ENCODE measurements at regions of chr16 and their contacts with region 1.

Region 1: GRCh38 chr16:50665128-50665878 is 15.8 kb downstream of the SNX20 start:
- DNase-seq: peak; percentile 69 to 80 (median 77)
- ATAC-seq: peak; percentile 94
- H3K4me3 ChIP-seq: no peak overlapping the region; the same call in 1 of the 2 replicates
- H3K27ac ChIP-seq: no peak overlapping the region
- H3K4me1 ChIP-seq: peaks cover 0 to 5% of the 10 kb centered on the region in 2 experiments; a peak in 2 of 5 replicates
- H3K27me3 ChIP-seq: peaks cover 4 to 14% of the 10 kb centered on the region in 2 experiments; a peak in 3 of 5 replicates
- CTCF ChIP-seq: peak; percentile 84 to 93 (median 92)
- EP300 ChIP-seq: no peak
- POLR2A ChIP-seq: no peak
- RAD21 ChIP-seq: peak; percentile 87 to 89

Region 2: GRCh38 chr16:50224286-50224685 is 441.0 kb before region 1 on chr16:
- CTCF ChIA-PET with region 1: no interaction called
- POLR2A ChIA-PET with region 1: no interaction called
- in situ Hi-C with region 1: no loop called
- intact Hi-C with region 1: no loop called
- DNase-seq: no peak
- ATAC-seq: no peak
- H3K4me3 ChIP-seq: no peak overlapping the region
- H3K27ac ChIP-seq: no peak overlapping the region
- H3K4me1 ChIP-seq: peaks cover 8 to 13% of the 10 kb centered on the region in 2 experiments; a peak in 4 of 5 replicates
- H3K27me3 ChIP-seq: no peaks in the 10 kb centered on the region
- CTCF ChIP-seq: no peak
- EP300 ChIP-seq: no peak
- POLR2A ChIP-seq: no peak
- RAD21 ChIP-seq: no peak

Region 3: DNA sequence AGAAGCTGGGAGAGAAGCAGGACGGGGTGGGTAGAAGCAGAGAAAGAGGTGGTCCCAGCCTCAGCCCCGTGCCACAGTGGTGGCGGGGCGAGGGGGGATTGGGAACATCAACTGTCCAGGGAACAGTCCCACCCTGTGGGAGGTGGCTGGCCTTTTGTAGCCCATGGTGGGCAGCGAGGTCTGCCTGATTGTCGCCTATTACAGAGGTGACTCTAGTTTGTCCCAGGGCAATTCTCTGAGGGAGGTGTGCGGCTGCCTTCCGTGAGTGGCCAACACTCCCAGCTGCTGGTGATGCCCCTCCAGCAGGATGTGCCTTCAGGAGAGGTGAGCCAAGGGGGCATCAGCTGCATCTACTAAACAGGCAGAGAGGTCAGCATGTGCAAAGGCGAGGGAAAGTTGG is 291.5 kb before region 1 on chr16:
- CTCF ChIA-PET with region 1: no interaction called
- POLR2A ChIA-PET with region 1: no interaction called
- in situ Hi-C with region 1: loop called (anchors 10 kb)
- intact Hi-C with region 1: loop called (anchors 2 kb)
- DNase-seq: no peak
- ATAC-seq: no peak
- H3K4me3 ChIP-seq: no peak overlapping the region
- H3K27ac ChIP-seq: no peak overlapping the region
- H3K4me1 ChIP-seq: peaks cover 4 to 7% of the 10 kb centered on the region in 2 experiments; a peak in 2 of 5 replicates
- H3K27me3 ChIP-seq: peaks cover 4 to 24% of the 10 kb centered on the region in 2 experiments; a peak in 3 of 5 replicates
- CTCF ChIP-seq: no peak
- EP300 ChIP-seq: no peak
- POLR2A ChIP-seq: no peak
- RAD21 ChIP-seq: no peak

Region 4: GRCh38 chr16:50593410-50594150 is 71.7 kb before region 1 on chr16:
- CTCF ChIA-PET with region 1: no interaction called
- POLR2A ChIA-PET with region 1: interaction called, 3 read pairs
- in situ Hi-C with region 1: no loop called
- intact Hi-C with region 1: loop called (anchors 10 kb)
- DNase-seq: peak; percentile 15 to 27 (median 21)
- ATAC-seq: peak; percentile 54; the same call in 1 of the 3 replicates
- H3K4me3 ChIP-seq: no peak overlapping the region
- H3K27ac ChIP-seq: no peak overlapping the region
- H3K4me1 ChIP-seq: no peaks in the 10 kb centered on the region; a peak in 1 of 5 replicates
- H3K27me3 ChIP-seq: peaks cover 2 to 34% of the 10 kb centered on the region in 2 experiments; a peak in 3 of 5 replicates
- CTCF ChIP-seq: peak; percentile 33 to 60 (median 37); a peak in 3 of 6 replicates
- EP300 ChIP-seq: no peak
- POLR2A ChIP-seq: no peak
- RAD21 ChIP-seq: peak; percentile 35 to 46; a peak in 3 of 4 replicates

Region 5: DNA sequence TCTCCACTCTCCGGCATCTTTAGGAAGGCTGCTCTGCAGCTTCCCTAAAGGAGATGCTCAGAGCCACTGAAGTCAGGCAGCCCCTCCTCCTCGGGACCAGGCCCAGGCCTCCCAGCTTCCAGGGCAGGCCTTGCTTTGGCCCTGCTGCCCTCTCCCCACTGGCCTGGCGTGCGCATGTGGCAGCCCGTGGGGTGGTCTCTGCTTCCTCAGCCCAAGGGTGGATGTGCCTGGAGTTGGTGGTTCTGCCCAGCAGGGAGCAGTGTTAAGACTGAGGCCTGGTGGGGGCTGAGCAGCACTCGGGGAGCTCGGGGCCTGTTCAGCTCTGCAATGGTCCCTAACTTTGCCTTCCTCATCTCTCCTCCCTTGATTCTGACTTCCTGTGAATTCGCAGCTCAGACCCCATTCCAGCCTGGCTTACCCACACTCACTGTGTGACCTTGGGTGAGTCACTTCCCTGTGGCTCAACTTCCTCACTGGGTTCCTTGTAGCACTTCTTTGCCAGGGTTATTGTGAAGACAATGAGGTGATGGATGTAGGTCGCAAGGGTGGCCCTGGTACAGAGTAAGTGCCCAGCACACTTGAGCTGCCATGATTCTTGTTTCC is 53.9 kb before region 1 on chr16:
- CTCF ChIA-PET with region 1: no interaction called
- POLR2A ChIA-PET with region 1: no interaction called
- in situ Hi-C with region 1: no loop called
- intact Hi-C with region 1: loop called (anchors 2 kb)
- DNase-seq: peak in 2 of 4 experiments; percentile 19 to 25
- ATAC-seq: peak; percentile 76
- H3K4me3 ChIP-seq: no peak overlapping the region
- H3K27ac ChIP-seq: no peak overlapping the region
- H3K4me1 ChIP-seq: peaks cover 0 to 9% of the 10 kb centered on the region in 2 experiments; a peak in 1 of 5 replicates
- H3K27me3 ChIP-seq: peaks cover 30 to 62% of the 10 kb centered on the region in 2 experiments; a peak in 4 of 5 replicates
- CTCF ChIP-seq: peak in 2 of 3 experiments; percentile 7 to 27; a peak in 2 of 6 replicates
- EP300 ChIP-seq: no peak
- POLR2A ChIP-seq: no peak
- RAD21 ChIP-seq: no peak

Region 6: DNA sequence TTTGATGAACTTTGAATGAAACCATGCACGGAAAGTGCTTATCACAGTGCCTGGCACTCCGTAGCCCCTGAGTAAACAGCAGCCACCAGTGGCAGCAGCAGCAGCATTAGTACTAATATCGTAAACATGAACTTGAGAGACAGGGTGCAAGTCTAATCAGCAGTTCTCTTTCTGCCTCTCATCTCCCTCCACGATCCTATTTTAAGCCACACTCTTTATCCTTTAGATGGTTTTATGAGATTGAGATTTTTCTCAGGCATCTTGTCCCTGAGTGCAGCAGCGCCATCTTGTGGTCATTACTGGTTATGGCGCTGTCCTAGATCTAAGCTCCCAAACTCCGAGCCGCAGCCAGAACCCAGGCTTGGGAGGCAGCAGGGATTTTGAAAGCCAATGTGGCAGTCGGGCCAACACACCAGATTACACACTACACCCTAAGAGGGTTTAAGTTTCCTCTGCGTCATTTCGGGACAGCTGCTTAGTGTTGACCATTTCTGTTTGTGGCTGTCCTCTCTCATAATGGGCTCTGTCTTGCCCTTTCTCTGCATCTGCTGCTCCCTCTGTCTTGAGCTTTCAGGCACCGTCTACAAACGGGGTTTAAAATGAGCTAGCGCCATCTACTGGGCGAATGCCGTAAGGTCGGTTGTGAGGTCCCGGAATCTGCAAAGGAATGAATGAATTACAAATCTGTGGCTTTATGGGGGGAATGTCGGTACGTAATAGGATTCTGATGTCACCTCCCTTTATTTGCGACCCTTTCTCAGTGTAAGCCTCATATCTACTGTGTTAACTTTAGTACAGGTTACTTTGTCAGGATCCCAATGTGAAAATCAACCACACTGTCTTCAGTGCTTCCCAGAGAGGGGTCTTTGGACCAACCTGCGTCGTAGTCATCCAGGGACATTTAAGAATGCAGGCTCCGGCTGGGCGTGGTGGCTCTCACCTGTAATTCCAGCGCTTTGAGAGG is 141.1 kb after region 1 on chr16:
- CTCF ChIA-PET with region 1: interaction called, 32 read pairs
- POLR2A ChIA-PET with region 1: no interaction called
- in situ Hi-C with region 1: loop called (anchors 5 kb)
- intact Hi-C with region 1: no loop called
- DNase-seq: peak; percentile 75 to 81 (median 78)
- ATAC-seq: peak; percentile 95
- H3K4me3 ChIP-seq: no peak overlapping the region
- H3K27ac ChIP-seq: no peak overlapping the region
- H3K4me1 ChIP-seq: no peaks in the 10 kb centered on the region
- H3K27me3 ChIP-seq: peaks cover 2 to 18% of the 10 kb centered on the region in 2 experiments; a peak in 2 of 5 replicates
- CTCF ChIP-seq: peak; percentile 83 to 92 (median 90)
- EP300 ChIP-seq: no peak
- POLR2A ChIP-seq: no peak
- RAD21 ChIP-seq: peak; percentile 72 to 85

Measured in K562 (cell line).